A673 (cell line): ENCODE measurements at regions of chr9 and their contacts with region 1.

Region 1: DNA sequence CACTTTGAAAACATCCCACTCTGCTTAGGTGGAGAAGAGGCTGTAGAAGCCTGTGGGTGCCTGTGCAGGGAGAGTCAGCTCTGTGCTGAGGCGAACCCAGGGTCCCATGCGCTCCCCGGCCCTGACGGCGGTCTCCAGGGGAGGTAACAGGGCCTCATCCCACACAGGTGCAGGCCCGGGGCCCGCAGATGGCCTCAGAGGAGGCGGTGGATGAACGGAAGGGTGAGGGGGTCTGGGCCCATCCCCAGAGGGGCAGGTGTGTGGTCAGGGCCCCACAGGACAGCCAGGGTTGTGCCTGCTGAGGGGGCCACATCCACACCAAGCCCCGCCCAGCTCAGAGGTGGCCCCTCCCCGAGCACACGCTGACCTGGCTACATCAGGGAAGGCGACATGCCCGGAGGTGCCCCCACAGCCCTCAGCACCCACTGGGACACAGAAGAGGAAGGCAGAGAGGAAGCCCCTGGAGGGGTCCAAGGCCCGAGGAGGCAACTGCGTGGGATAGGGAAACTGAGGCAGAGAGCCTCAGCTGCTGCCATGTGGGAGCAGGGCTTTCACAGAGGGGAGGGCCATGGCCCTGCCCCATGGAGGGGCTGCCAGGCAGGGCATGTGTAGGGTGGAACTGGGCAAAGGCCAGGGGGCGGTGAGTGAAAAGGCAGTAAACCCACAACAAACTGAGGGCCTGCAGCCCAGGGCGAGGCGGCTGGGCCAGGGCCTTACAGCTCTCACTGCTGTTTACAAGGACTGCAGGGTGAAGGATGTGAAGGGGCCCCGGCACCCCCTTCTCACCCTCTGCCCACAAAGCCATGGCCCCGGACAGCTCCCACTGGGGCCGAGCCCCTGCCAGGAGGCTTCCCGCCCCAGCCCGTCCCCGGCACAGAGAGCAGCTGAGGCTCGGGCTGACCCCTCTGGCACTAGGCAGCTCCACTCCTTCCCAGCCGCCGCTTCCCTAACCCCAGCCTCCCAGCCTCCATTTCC is 29.5 kb downstream of the EXD3 start:
- DNase-seq: no peak
- H3K4me3 ChIP-seq: no peak overlapping the region
- H3K27ac ChIP-seq: no peak overlapping the region
- H3K4me1 ChIP-seq: no peaks in the 10 kb centered on the region
- H3K27me3 ChIP-seq: no peaks in the 10 kb centered on the region
- CTCF ChIP-seq: no peak

Region 2: DNA sequence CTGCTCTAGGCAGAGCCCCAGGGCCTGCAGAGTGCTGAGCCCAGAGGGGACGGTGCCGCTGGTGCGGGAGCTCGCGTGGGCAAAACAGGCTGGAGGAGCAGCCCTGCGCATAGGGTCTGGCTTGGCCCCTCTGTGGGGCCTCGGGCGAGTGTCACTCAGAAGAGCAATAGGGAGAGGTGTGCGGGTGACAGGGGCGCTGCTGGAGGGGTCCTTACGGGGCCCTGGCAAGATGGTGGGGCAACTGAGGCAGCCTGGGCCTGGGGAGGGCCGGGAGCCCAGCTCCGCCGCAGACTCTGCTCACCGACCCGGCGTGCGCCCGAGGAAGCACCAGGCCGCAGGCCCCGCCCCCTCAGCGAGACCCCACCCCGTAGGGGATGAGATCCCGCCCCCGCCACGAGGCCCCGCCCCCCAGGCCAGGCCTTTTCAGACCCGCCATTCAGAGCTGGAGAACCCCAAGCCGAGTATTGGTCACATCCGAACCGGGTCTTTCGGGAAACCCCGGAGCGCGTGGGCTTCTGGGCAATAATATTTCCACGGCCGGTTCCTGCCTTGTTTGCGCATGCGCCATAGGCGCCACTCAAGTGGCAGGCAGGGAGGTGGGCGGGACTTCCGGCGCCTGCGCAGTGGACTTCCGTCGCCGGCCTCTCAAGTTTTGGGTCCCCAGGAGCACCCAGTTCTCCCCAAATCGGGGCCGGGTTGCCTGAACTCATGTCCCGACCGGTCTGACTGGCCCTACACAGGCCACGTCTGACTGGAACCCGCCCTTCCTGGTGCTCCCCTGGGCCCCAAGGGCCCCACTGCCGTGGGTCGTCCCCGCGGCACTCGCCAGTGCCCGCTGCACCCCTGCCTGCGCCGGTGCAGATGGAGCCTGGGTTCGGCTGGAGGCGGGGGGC is 170.1 kb before region 1 on chr9:
- CTCF ChIA-PET with region 1: no interaction called
- POLR2A ChIA-PET with region 1: no interaction called
- intact Hi-C with region 1: no loop called
- DNase-seq: peak; percentile 99
- H3K4me3 ChIP-seq: peak overlapping the region; percentile 72
- H3K27ac ChIP-seq: peak overlapping the region; percentile 87
- H3K4me1 ChIP-seq: peaks cover 9% of the 10 kb centered on the region
- H3K27me3 ChIP-seq: no peaks in the 10 kb centered on the region
- CTCF ChIP-seq: no peak

Region 3: GRCh38 chr9:137406876-137407589 is 13.6 kb after region 1 on chr9:
- CTCF ChIA-PET with region 1: interaction called, 10 read pairs
- POLR2A ChIA-PET with region 1: no interaction called
- intact Hi-C with region 1: no loop called
- DNase-seq: peak; percentile 77
- H3K4me3 ChIP-seq: peak overlapping the region; percentile 43
- H3K27ac ChIP-seq: no peak overlapping the region
- H3K4me1 ChIP-seq: peaks cover 23% of the 10 kb centered on the region
- H3K27me3 ChIP-seq: no peaks in the 10 kb centered on the region
- CTCF ChIP-seq: peak; percentile 60; the same call in 1 of the 2 replicates

Region 4: GRCh38 chr9:137797206-137798120 is 404.0 kb after region 1 on chr9:
- CTCF ChIA-PET with region 1: no interaction called
- POLR2A ChIA-PET with region 1: no interaction called
- intact Hi-C with region 1: no loop called
- DNase-seq: no peak
- H3K4me3 ChIP-seq: no peak overlapping the region
- H3K27ac ChIP-seq: no peak overlapping the region
- H3K4me1 ChIP-seq: no peaks in the 10 kb centered on the region
- H3K27me3 ChIP-seq: no peaks in the 10 kb centered on the region
- CTCF ChIP-seq: no peak

Region 5: DNA sequence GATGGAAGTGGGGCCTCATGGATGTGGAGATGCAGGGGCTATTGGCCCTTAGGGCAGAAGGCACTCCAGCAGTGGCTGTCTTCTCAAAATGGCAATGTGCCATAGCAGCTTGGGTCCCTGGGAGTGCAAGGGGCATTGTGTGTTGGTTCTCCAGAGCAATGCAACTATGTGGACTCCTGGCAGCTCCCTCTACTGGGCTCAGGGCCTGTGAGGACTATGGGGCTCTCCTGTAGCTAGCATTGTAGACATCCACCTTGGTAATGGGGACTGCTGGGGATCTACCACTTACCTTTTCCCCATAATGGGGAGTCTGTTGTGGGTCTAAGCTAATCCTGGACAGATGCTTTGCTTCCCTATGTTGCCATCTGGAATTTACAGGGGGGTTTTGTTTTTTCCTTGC is 463.3 kb after region 1 on chr9:
- CTCF ChIA-PET with region 1: no interaction called
- POLR2A ChIA-PET with region 1: no interaction called
- intact Hi-C with region 1: no loop called
- DNase-seq: no peak
- H3K4me3 ChIP-seq: no peak overlapping the region
- H3K27ac ChIP-seq: no peak overlapping the region
- H3K4me1 ChIP-seq: no peaks in the 10 kb centered on the region
- H3K27me3 ChIP-seq: no peaks in the 10 kb centered on the region
- CTCF ChIP-seq: no peak

Region 6: GRCh38 chr9:138120511-138121437 is 727.3 kb after region 1 on chr9:
- CTCF ChIA-PET with region 1: no interaction called
- POLR2A ChIA-PET with region 1: no interaction called
- intact Hi-C with region 1: no loop called
- DNase-seq: no peak
- H3K4me3 ChIP-seq: no peak overlapping the region
- H3K27ac ChIP-seq: no peak overlapping the region
- H3K4me1 ChIP-seq: no peaks in the 10 kb centered on the region
- H3K27me3 ChIP-seq: no peaks in the 10 kb centered on the region
- CTCF ChIP-seq: no peak